ENCODE measurements at regions of chr2 and their contacts with region 1.

Region 1: DNA sequence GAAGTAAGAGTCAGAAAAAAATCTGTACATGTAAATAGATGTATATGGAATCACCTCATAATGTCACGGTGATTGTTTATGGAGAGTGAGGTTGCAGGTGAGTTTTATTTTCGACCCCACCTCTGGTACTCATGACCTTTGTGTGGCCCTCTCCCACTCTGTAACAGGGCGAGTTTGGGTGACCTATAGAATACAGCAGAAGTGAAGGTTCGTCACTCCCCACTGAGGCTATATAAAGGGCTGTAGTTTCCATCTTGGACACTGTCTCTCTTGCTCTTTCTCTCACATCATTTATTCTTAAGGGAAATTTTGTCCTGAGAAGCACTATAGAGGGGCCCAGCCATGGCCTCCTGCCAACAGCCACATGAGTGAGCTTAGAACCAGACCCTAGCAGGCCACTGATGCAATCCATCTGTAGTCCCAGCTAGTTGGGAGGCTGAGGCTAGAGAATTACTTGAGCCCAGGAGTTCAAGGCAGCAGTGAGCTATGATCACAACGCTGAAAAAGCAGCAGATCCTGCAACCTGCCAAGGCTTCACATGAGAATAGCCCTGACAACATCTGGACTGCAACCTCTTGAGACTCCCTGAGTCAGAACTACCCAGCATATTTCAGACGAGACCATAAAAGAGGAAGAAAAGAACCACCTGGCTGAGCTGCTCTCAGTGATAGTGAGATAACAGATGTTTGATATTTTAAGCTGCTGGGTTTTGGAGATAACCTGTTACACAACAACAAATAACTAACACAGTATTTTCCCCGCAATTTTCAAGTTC is 74.3 kb upstream of the SLC1A4 start:
- DNase-seq: peak; percentile 96
- H3K4me3 ChIP-seq: peak overlapping the region; percentile 52
- H3K27ac ChIP-seq: peak overlapping the region; percentile 97
- H3K4me1 ChIP-seq: peaks cover 66% of the 10 kb centered on the region
- CTCF ChIP-seq: no peak

Region 2: GRCh38 chr2:64653349-64654062 is 261.4 kb before region 1 on chr2 and contains the start of gene SERTAD2:
- CTCF ChIA-PET with region 1: no interaction called
- POLR2A ChIA-PET with region 1: interaction called, 10 read pairs
- intact Hi-C with region 1: loop called (anchors 5 kb)
- DNase-seq: peak; percentile 95
- H3K4me3 ChIP-seq: peak within 1 kb of the TSS; percentile 93
- H3K27ac ChIP-seq: peak within 1 kb of the TSS; percentile 95
- H3K4me1 ChIP-seq: peaks cover 74% of the 10 kb centered on the region
- CTCF ChIP-seq: peak; percentile 49
- total RNA-seq, gene SERTAD2: 10.7 and 11.5 TPM in 2 replicates

Region 3: GRCh38 chr2:64904413-64905329 is 10.3 kb before region 1 on chr2:
- CTCF ChIA-PET with region 1: no interaction called
- POLR2A ChIA-PET with region 1: interaction called, 18 read pairs
- intact Hi-C with region 1: no loop called
- DNase-seq: no peak
- H3K4me3 ChIP-seq: no peak overlapping the region
- H3K27ac ChIP-seq: peak overlapping the region; percentile 10
- H3K4me1 ChIP-seq: peaks cover 29% of the 10 kb centered on the region
- CTCF ChIP-seq: no peak

Region 4: GRCh38 chr2:64937687-64938491 is 23.0 kb after region 1 on chr2:
- CTCF ChIA-PET with region 1: no interaction called
- POLR2A ChIA-PET with region 1: interaction called, 26 read pairs
- intact Hi-C with region 1: loop called (anchors 1 kb)
- DNase-seq: no peak
- H3K4me3 ChIP-seq: peak overlapping the region; percentile 43
- H3K27ac ChIP-seq: peak overlapping the region; percentile 23
- H3K4me1 ChIP-seq: peaks cover 69% of the 10 kb centered on the region
- CTCF ChIP-seq: no peak

Region 5: GRCh38 chr2:65031341-65032018 is 116.6 kb after region 1 on chr2:
- CTCF ChIA-PET with region 1: interaction called, 19 read pairs
- POLR2A ChIA-PET with region 1: interaction called, 23 read pairs
- intact Hi-C with region 1: loop called (anchors 1 kb)
- DNase-seq: peak; percentile 96
- H3K4me3 ChIP-seq: peak overlapping the region; percentile 64
- H3K27ac ChIP-seq: peak overlapping the region; percentile 98
- H3K4me1 ChIP-seq: peaks cover 75% of the 10 kb centered on the region
- CTCF ChIP-seq: no peak

Region 6: GRCh38 chr2:65169760-65170136 is 254.8 kb after region 1 on chr2:
- CTCF ChIA-PET with region 1: interaction called, 4 read pairs
- POLR2A ChIA-PET with region 1: interaction called, 3 read pairs
- intact Hi-C with region 1: loop called (anchors 2 kb)
- DNase-seq: no peak
- H3K4me3 ChIP-seq: no peak overlapping the region
- H3K27ac ChIP-seq: no peak overlapping the region
- H3K4me1 ChIP-seq: peaks cover 22% of the 10 kb centered on the region
- CTCF ChIP-seq: no peak